ENCODE measurements at regions of chr17 and their contacts with region 1.

Region 1: DNA sequence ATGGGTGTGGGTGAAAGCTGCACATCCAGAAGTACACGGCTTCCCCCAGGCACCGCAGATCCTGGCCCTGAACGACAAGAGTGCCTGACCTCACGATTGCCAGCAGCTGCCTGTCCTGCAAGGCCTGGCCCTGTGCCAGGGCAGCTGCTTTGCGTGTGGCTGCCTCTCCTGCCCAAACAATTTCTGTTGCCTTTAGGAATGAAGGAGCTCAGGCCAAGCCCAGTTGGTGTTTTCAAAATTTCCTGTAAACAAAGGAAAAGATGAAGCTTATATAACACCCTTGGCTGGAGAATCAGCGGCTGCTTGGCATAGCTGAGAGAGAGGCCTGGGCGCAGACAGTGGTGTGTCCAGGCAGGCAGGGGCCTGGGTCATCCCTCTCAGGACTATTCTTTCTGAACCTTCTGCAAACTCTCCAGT is 11.7 kb upstream of the SLC47A2 start:
- DNase-seq: peak; percentile 95
- ATAC-seq: peak; percentile 81

Region 2: GRCh38 chr17:19672009-19672750 is 55.9 kb before region 1 on chr17:
- intact Hi-C with region 1: loop called (anchors 5 kb)
- DNase-seq: no peak
- ATAC-seq: peak; percentile 95

Measured in Right ventricle myocardium inferior (tissue), 1 donor.